ENCODE measurements at regions of chr2 and their contacts with region 1.

Region 1: GRCh38 chr2:128062571-128062970 is 28.4 kb upstream of the UGGT1 start:
- DNase-seq: no peak
- H3K4me3 ChIP-seq: no peak overlapping the region
- H3K27ac ChIP-seq: no peak overlapping the region
- H3K27me3 ChIP-seq: no peaks in the 10 kb centered on the region
- CTCF ChIP-seq: no peak

Region 2: GRCh38 chr2:128073278-128073677 is 10.7 kb after region 1 on chr2:
- CTCF ChIA-PET with region 1: interaction called, 11 read pairs
- POLR2A ChIA-PET with region 1: no interaction called
- DNase-seq: no peak
- H3K4me3 ChIP-seq: no peak overlapping the region
- H3K27ac ChIP-seq: no peak overlapping the region
- H3K27me3 ChIP-seq: peaks cover 2% of the 10 kb centered on the region
- CTCF ChIP-seq: no peak

Region 3: GRCh38 chr2:128090945-128091725 is 28.6 kb after region 1 on chr2 and contains the start of gene UGGT1:
- CTCF ChIA-PET with region 1: interaction called, 13 read pairs
- POLR2A ChIA-PET with region 1: interaction called, 3 read pairs
- DNase-seq: peak; percentile 94
- H3K4me3 ChIP-seq: peak within 1 kb of the TSS; percentile 99
- H3K27ac ChIP-seq: peak within 1 kb of the TSS; percentile 86
- H3K27me3 ChIP-seq: no peaks in the 10 kb centered on the region
- CTCF ChIP-seq: no peak
- polyA plus RNA-seq, gene UGGT1: 49.7 and 61.4 TPM in 2 replicates

Region 4: GRCh38 chr2:128103407-128103806 is 40.8 kb after region 1 on chr2:
- CTCF ChIA-PET with region 1: interaction called, 11 read pairs
- POLR2A ChIA-PET with region 1: no interaction called
- DNase-seq: no peak
- H3K4me3 ChIP-seq: no peak overlapping the region
- H3K27ac ChIP-seq: no peak overlapping the region
- H3K27me3 ChIP-seq: no peaks in the 10 kb centered on the region
- CTCF ChIP-seq: no peak

Region 5: DNA sequence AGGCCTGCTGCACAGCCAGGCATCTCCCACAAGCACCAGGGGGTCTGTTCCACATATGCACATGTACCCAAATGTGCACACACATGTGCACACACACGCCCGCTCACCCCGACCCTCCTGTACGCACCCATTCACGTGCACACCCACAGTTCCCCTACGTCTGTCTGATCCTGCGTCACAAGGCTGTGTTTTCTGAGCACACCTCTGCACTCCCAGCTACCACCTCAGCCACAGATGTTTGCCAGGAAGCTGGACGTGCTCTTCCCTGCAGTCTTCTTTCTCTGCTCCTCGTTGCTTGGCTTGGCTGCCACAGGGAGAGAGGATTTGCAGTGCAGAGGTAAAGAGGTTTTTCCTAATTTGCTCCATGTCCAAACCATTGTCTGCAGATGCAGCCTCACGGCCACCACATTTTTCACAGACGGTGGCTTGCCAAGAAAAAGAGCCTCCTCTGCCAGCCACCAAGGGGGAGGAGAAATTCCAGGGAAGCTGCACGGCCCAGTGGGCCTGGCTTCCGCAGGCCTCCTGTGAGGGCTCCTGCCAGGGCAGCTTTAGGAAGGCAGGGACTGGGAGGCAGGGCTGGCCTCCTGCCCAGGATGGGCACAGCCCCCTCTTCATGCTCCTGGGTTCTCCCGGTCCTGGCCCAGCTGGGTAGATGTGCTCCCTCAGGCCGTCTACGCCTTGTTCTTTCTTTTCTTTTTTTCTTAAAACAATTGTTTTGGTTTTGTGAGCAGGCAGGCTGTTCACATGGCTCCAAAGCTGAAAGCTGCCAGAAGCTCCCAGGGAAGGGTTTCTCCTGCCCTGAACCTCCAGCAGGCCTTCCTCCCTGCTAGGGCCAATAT is 285.3 kb after region 1 on chr2:
- CTCF ChIA-PET with region 1: no interaction called
- POLR2A ChIA-PET with region 1: no interaction called
- DNase-seq: no peak
- H3K4me3 ChIP-seq: no peak overlapping the region
- H3K27ac ChIP-seq: peak overlapping the region; percentile 40
- H3K27me3 ChIP-seq: no peaks in the 10 kb centered on the region
- CTCF ChIP-seq: no peak

Region 6: GRCh38 chr2:129849559-129850160 is 1787.1 kb after region 1 on chr2:
- CTCF ChIA-PET with region 1: interaction called, 14 read pairs
- POLR2A ChIA-PET with region 1: no interaction called
- DNase-seq: peak; percentile 46
- H3K4me3 ChIP-seq: no peak overlapping the region
- H3K27ac ChIP-seq: no peak overlapping the region
- H3K27me3 ChIP-seq: no peaks in the 10 kb centered on the region
- CTCF ChIP-seq: peak; percentile 71